ENCODE measurements at regions of chr19 and their contacts with region 1.

Region 1: GRCh38 chr19:49391581-49392399 is 3.7 kb downstream of the KASH5 start:
- DNase-seq: peak; percentile 77 to 88
- ATAC-seq: peak; percentile 85 to 88 (median 86)
- H3K4me3 ChIP-seq: no peak overlapping the region
- H3K27ac ChIP-seq: no peak overlapping the region
- H3K4me1 ChIP-seq: no peaks in the 10 kb centered on the region
- H3K27me3 ChIP-seq: peaks cover 0 to 6% (median 5%) of the 10 kb centered on the region in 3 donors
- CTCF ChIP-seq: peak; percentile 81

Region 2: DNA sequence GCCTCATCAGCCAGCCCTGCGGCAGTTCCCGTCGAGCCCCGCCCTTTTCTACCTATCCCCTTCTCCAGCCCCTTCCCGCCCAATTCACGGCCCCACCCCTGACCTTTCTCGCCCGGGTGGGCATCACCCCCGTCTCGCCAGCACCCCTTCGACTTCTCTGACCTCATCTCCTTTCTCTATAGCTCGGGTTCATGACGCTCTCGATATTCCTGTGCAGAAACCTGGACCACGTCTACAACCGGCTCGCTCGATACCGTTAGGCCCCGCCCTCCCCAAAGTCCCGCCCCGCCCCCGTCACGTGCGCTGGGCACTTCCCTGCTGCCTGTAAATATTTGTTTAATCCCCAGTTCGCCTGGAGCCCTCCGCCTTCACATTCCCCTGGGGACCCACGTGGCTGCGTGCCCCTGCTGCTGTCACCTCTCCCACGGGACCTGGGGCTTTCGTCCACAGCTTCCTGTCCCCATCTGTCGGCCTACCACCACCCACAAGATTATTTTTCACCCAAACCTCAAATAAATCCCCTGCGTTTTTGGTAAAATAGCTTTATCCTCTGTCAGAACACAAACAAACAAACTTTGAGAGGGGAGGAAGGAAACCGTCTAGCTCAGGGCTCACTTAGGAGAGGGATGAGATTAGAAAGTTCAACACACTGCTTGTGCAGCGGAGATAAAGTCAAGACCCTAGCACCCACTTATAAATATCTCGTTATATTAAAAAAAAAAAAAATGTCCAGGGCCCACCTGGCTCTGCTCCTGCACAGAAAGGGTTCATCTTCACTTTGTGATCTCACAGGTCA is 51.5 kb before region 1 on chr19:
- intact Hi-C with region 1: no loop called
- DNase-seq: peak; percentile 59 to 83
- ATAC-seq: peak; percentile 18 to 57 (median 27)
- H3K4me3 ChIP-seq: peak overlapping the region; percentile 63
- H3K27ac ChIP-seq: peak overlapping the region; percentile 75
- H3K4me1 ChIP-seq: peaks cover 5% of the 10 kb centered on the region
- H3K27me3 ChIP-seq: no peaks in the 10 kb centered on the region
- CTCF ChIP-seq: no peak

Region 3: DNA sequence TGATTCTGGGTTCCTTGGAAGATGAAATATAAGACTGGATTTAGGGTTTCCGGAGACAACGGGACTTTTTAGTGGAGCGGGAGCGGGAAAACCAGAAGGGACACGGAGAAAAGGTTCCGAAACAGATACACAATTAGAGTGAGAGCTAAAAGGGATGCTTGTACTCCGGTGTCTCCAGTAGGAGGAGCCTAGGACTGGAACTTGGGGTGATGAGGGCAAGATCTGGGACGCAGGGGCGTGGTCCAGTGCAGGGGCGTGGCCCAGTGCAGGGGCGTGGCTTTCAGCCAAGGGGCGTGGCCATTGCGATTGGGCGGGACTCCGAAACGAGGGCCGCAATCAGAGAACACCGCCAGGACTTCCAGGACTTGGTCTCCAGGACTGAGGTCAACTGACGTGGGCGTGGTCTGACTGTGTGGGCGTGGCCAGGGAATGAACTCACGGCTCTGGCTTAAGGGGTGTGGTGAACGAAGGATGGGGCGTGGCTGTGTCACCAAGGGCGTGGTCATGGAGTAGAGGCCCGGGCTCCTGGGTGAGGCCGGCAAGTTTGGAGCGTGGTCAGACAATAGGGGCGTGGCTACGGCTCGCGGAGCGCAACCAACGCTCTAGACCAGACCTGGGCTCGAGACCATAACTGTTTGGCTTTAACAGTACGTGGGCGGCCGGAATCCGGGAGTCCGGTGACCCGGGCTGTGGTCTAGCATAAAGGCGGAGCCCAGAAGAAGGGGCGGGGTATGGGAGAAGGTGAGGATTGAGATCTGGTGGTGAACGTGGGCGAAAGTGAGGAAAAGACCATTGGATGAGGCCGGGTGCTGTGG is 28.3 kb before region 1 on chr19 and contains the start of gene DKKL1:
- intact Hi-C with region 1: no loop called
- DNase-seq: peak; percentile 99
- ATAC-seq: peak; percentile 92 to 94 (median 92)
- H3K4me3 ChIP-seq: peak within 1 kb of the TSS; percentile 83
- H3K27ac ChIP-seq: peak within 1 kb of the TSS; percentile 79
- H3K4me1 ChIP-seq: peaks cover 4% of the 10 kb centered on the region
- H3K27me3 ChIP-seq: no peaks in the 10 kb centered on the region
- CTCF ChIP-seq: no peak
- total RNA-seq, gene DKKL1: not detected

Region 4: DNA sequence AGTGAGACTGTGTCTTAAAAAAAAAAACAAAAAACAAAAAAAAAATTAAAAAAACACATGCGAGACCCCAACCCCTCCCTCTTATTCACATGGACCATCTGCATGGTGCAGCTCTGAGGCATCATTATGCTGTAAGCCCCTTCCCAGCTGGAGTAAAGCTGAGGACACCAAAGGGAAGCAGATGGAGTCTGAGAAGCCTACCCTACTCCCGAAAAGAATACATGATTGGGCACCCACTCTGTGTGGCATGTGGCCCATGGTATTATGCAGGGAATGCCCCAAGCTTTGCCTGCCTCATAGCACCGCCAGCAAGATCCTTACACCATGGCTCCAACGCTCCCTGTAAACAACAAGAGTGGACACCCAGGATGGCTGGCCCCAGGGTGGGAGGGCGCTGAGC is 26.7 kb after region 1 on chr19:
- intact Hi-C with region 1: loop called in 1 of 2 experiments (anchors 2 kb)
- DNase-seq: no peak
- ATAC-seq: no peak
- H3K4me3 ChIP-seq: no peak overlapping the region
- H3K27ac ChIP-seq: no peak overlapping the region
- H3K4me1 ChIP-seq: peaks cover 18% of the 10 kb centered on the region
- H3K27me3 ChIP-seq: peaks cover 0 to 75% (median 25%) of the 10 kb centered on the region in 3 donors
- CTCF ChIP-seq: no peak

Region 5: GRCh38 chr19:49593233-49594113 is 201.7 kb after region 1 on chr19:
- intact Hi-C with region 1: no loop called
- DNase-seq: peak; percentile 95 to 97
- ATAC-seq: peak; percentile 77 to 83 (median 80)
- H3K4me3 ChIP-seq: peak overlapping the region; percentile 78
- H3K27ac ChIP-seq: peak overlapping the region; percentile 93
- H3K4me1 ChIP-seq: peaks cover 16% of the 10 kb centered on the region
- H3K27me3 ChIP-seq: no peaks in the 10 kb centered on the region
- CTCF ChIP-seq: no peak

Measured in psoas muscle (tissue), 8 donors.